Posterior cingulate gyrus (tissue), 11 donors: ENCODE measurements at regions of chr6 and their contacts with region 1.

Region 1: GRCh38 chr6:135423649-135424128 is 73.9 kb downstream of the AHI1 start:
- DNase-seq: no peak

Region 2: GRCh38 chr6:135145063-135145800 is 278.5 kb before region 1 on chr6:
- intact Hi-C with region 1: loop called (anchors 5 kb)
- DNase-seq: no peak

Region 3: DNA sequence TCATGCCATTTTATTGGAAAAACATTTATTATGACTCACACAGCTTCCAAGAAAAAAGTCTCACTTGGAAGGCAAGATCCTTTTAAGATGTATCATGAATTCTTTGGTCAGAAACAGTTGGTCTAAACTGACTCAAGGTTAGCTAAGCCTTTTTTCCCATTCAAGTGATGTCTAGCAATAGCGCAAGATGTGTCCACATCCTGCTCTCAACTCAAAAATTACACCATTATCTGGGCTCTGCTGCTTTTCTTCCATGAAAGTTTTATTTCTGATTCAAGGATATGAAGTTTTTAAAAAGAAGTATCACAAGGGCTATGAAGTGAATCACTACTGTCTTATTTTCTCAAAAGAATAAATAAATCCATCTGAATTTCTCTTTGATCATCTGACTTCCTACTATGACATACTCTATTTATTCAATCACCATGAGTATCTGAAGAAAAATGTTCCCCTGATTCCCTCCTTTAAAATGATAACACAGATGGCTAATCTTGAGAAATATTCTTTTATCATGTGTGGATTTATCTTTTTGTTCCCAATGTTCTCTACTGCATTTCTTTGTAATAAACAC is 65.4 kb before region 1 on chr6:
- intact Hi-C with region 1: no loop called
- DNase-seq: no peak